Left colon (tissue), 2 donors: ENCODE measurements at regions of chr1 and their contacts with region 1.

Region 1: DNA sequence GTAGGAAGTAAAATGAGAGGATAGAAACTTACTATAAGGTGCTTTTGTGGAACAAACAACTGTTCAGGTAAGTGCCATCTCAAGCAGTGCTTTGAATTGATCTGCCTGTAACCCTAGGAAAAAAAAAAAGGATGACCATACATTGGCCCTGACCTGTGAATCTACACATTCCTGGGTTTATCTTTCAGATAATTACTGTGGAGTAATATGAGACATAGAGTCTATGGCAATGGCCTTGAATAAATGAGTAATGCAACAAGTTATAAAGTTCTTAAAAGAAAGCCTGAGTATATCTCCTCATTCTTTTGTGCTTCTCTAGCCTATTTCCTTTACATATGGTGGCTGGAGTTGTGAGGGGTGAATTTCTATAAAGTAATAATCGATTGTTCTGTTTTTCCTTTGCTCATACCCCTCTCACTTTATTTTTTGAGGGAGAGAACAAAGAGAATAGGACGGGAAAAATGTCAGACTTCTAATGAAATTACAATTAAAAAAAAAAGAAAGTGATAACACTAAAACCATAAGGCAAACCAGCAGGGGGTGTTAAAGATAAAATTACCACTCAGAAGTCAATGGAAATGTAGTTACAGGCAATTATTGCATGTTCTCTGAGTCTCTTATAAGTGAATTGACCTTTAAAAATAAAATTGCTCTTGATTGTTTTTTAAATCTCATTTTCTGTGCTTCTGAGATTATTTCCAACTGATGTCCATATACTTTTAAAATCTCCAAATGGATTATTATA is 12.4 kb upstream of the ATP1A1 start:
- DNase-seq: no peak
- ATAC-seq: peak; percentile 58

Region 2: GRCh38 chr1:116409751-116410191 is 49.2 kb after region 1 on chr1:
- intact Hi-C with region 1: no loop called
- DNase-seq: no peak
- ATAC-seq: no peak

Region 3: GRCh38 chr1:116498789-116499628 is 138.4 kb after region 1 on chr1:
- intact Hi-C with region 1: loop called in 1 of 2 experiments (anchors 5 kb)
- DNase-seq: peak; percentile 48 to 57
- ATAC-seq: peak; percentile 83

Region 4: GRCh38 chr1:116667575-116668105 is 307.0 kb after region 1 on chr1 and contains the start of gene IGSF3:
- intact Hi-C with region 1: no loop called
- DNase-seq: peak; percentile 80 to 86
- ATAC-seq: peak; percentile 84
- total RNA-seq, gene IGSF3: 27.5 to 29.8 TPM